ENCODE measurements at regions of chr5 and their contacts with region 1.

Region 1: DNA sequence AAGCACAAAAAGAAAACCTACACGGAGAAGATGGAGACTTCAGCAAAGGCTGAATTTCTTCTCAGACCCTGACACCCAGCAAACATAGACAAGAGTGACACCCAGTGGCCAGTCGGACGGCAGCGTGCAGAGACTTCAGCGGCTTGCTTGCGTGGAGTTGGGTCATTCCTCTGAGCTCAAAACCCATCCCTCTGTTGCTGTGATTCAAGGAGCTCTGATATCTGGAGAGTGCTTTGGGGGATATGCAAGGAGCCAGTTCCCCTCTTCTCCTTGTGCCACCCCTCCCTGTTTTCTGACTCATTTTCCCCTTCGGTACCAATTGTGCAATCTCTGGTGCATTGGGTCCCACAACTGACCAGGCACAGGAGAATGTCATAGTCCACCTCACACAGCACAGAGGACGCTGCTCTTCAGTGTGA is 27.5 kb downstream of the SH3TC2 start:
- DNase-seq: peak; percentile 73
- H3K4me3 ChIP-seq: no peak overlapping the region
- H3K27ac ChIP-seq: no peak overlapping the region
- H3K4me1 ChIP-seq: peaks cover 39% of the 10 kb centered on the region
- H3K27me3 ChIP-seq: no peaks in the 10 kb centered on the region
- CTCF ChIP-seq: peak; percentile 87 to 88
- POLR2A ChIP-seq: no peak

Region 2: DNA sequence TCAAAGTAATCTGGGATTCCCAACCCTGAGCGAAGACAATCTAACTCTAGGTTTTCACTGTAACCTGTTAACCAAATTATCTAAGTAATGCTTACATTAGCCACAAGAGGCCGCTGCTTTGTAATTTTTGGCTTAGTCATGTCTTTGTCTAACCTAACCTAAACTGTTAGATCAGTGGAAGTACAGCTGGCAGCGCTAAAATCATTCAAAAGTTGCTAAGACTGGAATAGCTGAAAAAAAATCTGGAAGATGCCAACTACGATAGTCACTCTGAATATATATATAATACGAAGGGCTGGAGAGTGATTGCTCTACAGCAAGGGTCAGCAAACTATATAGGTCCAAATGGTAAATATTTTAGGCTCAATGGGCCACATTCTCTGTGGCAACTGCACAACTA is 591.4 kb before region 1 on chr5:
- CTCF ChIA-PET with region 1: no interaction called
- POLR2A ChIA-PET with region 1: no interaction called
- dilution Hi-C with region 1: no loop called
- intact Hi-C with region 1: loop called (anchors 10 kb)
- DNase-seq: peak; percentile 79
- H3K4me3 ChIP-seq: no peak overlapping the region
- H3K27ac ChIP-seq: no peak overlapping the region
- H3K4me1 ChIP-seq: no peaks in the 10 kb centered on the region
- H3K27me3 ChIP-seq: no peaks in the 10 kb centered on the region
- CTCF ChIP-seq: peak; percentile 48 to 50
- POLR2A ChIP-seq: no peak

Region 3: DNA sequence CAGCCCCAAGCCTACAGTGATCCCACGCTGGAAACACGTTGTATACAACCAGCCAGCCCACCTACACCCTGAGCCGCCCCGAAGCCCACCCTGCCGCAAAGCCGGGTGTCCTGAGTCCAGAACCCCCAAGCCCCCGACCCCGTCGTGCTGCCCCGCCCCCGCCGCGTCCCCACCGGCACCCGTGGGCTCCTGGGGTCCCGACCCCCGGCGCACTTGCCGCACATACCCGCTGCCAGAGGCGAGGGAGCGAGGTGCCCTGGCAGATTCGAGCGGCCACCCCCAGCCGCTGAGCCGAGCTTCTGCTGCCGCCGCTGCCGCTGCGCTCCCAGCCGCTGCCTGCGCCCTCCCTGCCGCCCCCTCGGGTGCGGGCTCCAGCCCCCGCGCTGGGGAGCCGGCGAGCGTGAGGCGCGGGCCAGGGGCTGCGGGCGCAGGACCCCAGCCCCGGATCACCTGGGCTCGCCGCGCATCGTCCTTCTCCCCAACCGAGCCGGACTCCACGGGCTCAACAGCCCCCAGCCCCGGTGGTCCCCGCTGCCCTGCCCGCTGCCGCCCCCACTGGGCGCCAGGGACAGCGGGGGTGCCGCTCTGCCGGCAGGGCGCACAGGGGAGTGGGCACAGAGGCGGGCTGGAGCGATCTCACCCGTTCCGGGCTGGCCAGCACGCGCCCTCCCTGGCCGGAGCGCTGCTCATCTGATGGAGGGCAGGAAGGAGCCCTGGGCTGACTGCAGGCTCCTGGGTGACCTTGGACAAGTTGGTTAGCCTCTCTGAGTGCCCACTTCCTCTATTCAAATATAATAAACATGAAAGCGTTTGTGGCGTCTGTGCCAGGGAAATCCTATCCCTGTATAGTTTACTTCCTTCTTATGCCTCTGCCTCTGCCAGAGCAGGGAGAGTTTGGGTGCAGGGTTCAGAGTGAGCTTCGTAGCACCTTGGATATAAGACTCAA is 381.3 kb before region 1 on chr5 and contains the start of gene HTR4:
- CTCF ChIA-PET with region 1: no interaction called
- POLR2A ChIA-PET with region 1: no interaction called
- dilution Hi-C with region 1: no loop called
- intact Hi-C with region 1: no loop called
- DNase-seq: no peak
- H3K4me3 ChIP-seq: no peak within 1 kb of the TSS
- H3K27ac ChIP-seq: no peak within 1 kb of the TSS
- H3K4me1 ChIP-seq: no peaks in the 10 kb centered on the region
- H3K27me3 ChIP-seq: peaks cover 42 to 50% of the 10 kb centered on the region in 2 experiments
- CTCF ChIP-seq: no peak
- POLR2A ChIP-seq: no peak
- total RNA-seq, gene HTR4: not detected in 2 replicates

Region 4: GRCh38 chr5:148805326-148806290 is 229.8 kb before region 1 on chr5:
- CTCF ChIA-PET with region 1: interaction called, 16 read pairs
- POLR2A ChIA-PET with region 1: no interaction called
- dilution Hi-C with region 1: no loop called
- intact Hi-C with region 1: no loop called
- DNase-seq: peak; percentile 77
- H3K4me3 ChIP-seq: no peak overlapping the region
- H3K27ac ChIP-seq: peak overlapping the region; percentile 10
- H3K4me1 ChIP-seq: peaks cover 35% of the 10 kb centered on the region
- H3K27me3 ChIP-seq: no peaks in the 10 kb centered on the region
- CTCF ChIP-seq: no peak
- POLR2A ChIP-seq: no peak

Region 5: GRCh38 chr5:148957591-148958202 is 77.7 kb before region 1 on chr5:
- CTCF ChIA-PET with region 1: interaction called, 64 read pairs
- POLR2A ChIA-PET with region 1: no interaction called
- dilution Hi-C with region 1: no loop called
- intact Hi-C with region 1: loop called (anchors 1 kb)
- DNase-seq: peak; percentile 66
- H3K4me3 ChIP-seq: no peak overlapping the region
- H3K27ac ChIP-seq: no peak overlapping the region
- H3K4me1 ChIP-seq: no peaks in the 10 kb centered on the region
- H3K27me3 ChIP-seq: no peaks in the 10 kb centered on the region
- CTCF ChIP-seq: peak; percentile 77 to 88
- POLR2A ChIP-seq: no peak

Region 6: GRCh38 chr5:148991606-148992005 is 43.8 kb before region 1 on chr5:
- CTCF ChIA-PET with region 1: interaction called, 21 read pairs
- POLR2A ChIA-PET with region 1: no interaction called
- dilution Hi-C with region 1: no loop called
- intact Hi-C with region 1: no loop called
- DNase-seq: no peak
- H3K4me3 ChIP-seq: no peak overlapping the region
- H3K27ac ChIP-seq: no peak overlapping the region
- H3K4me1 ChIP-seq: no peaks in the 10 kb centered on the region
- H3K27me3 ChIP-seq: no peaks in the 10 kb centered on the region
- CTCF ChIP-seq: no peak
- POLR2A ChIP-seq: no peak

Region 7: DNA sequence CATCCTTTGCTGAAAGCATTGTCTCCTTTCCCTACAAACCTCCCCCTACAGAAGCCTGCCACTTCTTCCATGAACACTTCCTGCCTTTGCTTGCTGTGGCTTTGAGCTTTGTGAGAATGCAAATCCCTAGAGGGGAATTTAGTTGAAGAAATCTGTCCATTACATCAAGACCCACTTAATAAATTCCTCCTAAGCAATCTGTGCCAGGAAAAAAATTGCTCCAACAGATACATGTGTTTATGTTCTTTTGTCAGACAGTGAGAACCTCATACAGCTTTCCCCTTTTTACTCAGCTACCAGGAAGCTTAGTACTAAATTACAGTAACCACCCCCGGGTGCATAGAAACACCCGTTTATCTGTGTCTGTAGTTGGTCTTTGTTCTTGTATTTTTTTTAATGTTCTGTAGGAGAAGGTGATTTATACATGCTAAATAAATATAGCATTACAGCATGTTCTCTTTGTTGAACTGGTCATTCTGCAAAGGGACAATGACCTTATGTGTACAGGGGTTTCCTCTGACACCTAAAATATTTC is 16.4 kb before region 1 on chr5:
- CTCF ChIA-PET with region 1: interaction called, 22 read pairs
- POLR2A ChIA-PET with region 1: no interaction called
- dilution Hi-C with region 1: no loop called
- intact Hi-C with region 1: no loop called
- DNase-seq: no peak
- H3K4me3 ChIP-seq: no peak overlapping the region
- H3K27ac ChIP-seq: no peak overlapping the region
- H3K4me1 ChIP-seq: peaks cover 9% of the 10 kb centered on the region
- H3K27me3 ChIP-seq: no peaks in the 10 kb centered on the region
- CTCF ChIP-seq: no peak
- POLR2A ChIP-seq: no peak

Region 8: GRCh38 chr5:149228618-149229297 is 193.4 kb after region 1 on chr5:
- CTCF ChIA-PET with region 1: interaction called, 4 read pairs
- POLR2A ChIA-PET with region 1: no interaction called
- dilution Hi-C with region 1: no loop called
- intact Hi-C with region 1: loop called (anchors 5 kb)
- DNase-seq: peak; percentile 84
- H3K4me3 ChIP-seq: no peak overlapping the region
- H3K27ac ChIP-seq: peak overlapping the region; percentile 42
- H3K4me1 ChIP-seq: peaks cover 30% of the 10 kb centered on the region
- H3K27me3 ChIP-seq: no peaks in the 10 kb centered on the region
- CTCF ChIP-seq: peak; percentile 64 to 73
- POLR2A ChIP-seq: no peak